H1 (cell line): ENCODE measurements at regions of chr3 and their contacts with region 1.

Region 1: GRCh38 chr3:187150599-187150998 is 11.3 kb upstream of the RPL39L start:
- DNase-seq: peak in 1 of 2 experiments; percentile 77
- H3K4me3 ChIP-seq: no peak overlapping the region
- H3K27ac ChIP-seq: no peak overlapping the region
- H3K4me1 ChIP-seq: no peaks in the 10 kb centered on the region
- H3K27me3 ChIP-seq: no peaks in the 10 kb centered on the region
- CTCF ChIP-seq: peak; percentile 32 to 63 (median 47)
- EP300 ChIP-seq: no peak
- POLR2A ChIP-seq: no peak
- RAD21 ChIP-seq: peak; percentile 22 to 34; a peak in 3 of 4 replicates

Region 2: GRCh38 chr3:187139126-187139894 is 11.3 kb before region 1 on chr3 and contains the start of gene RPL39L:
- CTCF ChIA-PET with region 1: interaction called, 95 read pairs
- POLR2A ChIA-PET with region 1: interaction called, 5 read pairs
- DNase-seq: peak; percentile 75 to 95
- H3K4me3 ChIP-seq: peak within 1 kb of the TSS; percentile 49 to 72 (median 59)
- H3K27ac ChIP-seq: peak within 1 kb of the TSS; percentile 78
- H3K4me1 ChIP-seq: peaks cover 0 to 3% (median 0%) of the 10 kb centered on the region in 4 experiments; a peak in 2 of 7 replicates
- H3K27me3 ChIP-seq: no peaks in the 10 kb centered on the region
- CTCF ChIP-seq: peak; percentile 88 to 90 (median 90)
- EP300 ChIP-seq: peak in 1 of 2 experiments; percentile 50; a peak in 1 of 3 replicates
- POLR2A ChIP-seq: peak; percentile 78 to 93
- RAD21 ChIP-seq: peak; percentile 53 to 69; a peak in 3 of 4 replicates
- total RNA-seq, gene RPL39L: 67.7 and 77.0 TPM in 2 replicates